Activated T-helper 2 cell treated with anti-CD3 and anti-CD28 coated beads, Interferon-gamma antibody, Interleukin-2, Interleukin-4, amounts not matched to agents 10 μg/mL and 5 μg/mL and 100 μg/mL, durations not matched to agents 14 hours and 24 hours and 36 hours (primary cell): ENCODE measurements at regions of chr11 and their contacts with region 1.

Region 1: GRCh38 chr11:120682866-120683265 is 171.3 kb downstream of the GRIK4 start:
- DNase-seq: no peak
- H3K4me3 Mint-ChIP-seq: no peak overlapping the region
- H3K27ac Mint-ChIP-seq: no peak overlapping the region
- H3K4me1 Mint-ChIP-seq: no peaks in the 10 kb centered on the region
- H3K27me3 Mint-ChIP-seq: peaks cover 9% of the 10 kb centered on the region

Region 2: GRCh38 chr11:120335908-120336640 is 346.8 kb before region 1 on chr11 and contains the start of gene ARHGEF12:
- intact Hi-C with region 1: loop called (anchors 10 kb)
- DNase-seq: peak; percentile 56
- H3K4me3 Mint-ChIP-seq: peak within 1 kb of the TSS; percentile 91
- H3K27ac Mint-ChIP-seq: peak within 1 kb of the TSS; percentile 53
- H3K4me1 Mint-ChIP-seq: peaks cover 29% of the 10 kb centered on the region
- H3K27me3 Mint-ChIP-seq: peaks cover 53% of the 10 kb centered on the region
- total RNA-seq, gene ARHGEF12: 17.4 and 17.7 TPM in 2 replicates

Region 3: GRCh38 chr11:120527111-120527761 is 155.6 kb before region 1 on chr11:
- intact Hi-C with region 1: no loop called
- DNase-seq: no peak
- H3K4me3 Mint-ChIP-seq: no peak overlapping the region
- H3K27ac Mint-ChIP-seq: no peak overlapping the region
- H3K4me1 Mint-ChIP-seq: no peaks in the 10 kb centered on the region
- H3K27me3 Mint-ChIP-seq: no peaks in the 10 kb centered on the region